CD14-positive monocyte (primary cell): ENCODE measurements at regions of chr10 and their contacts with region 1.

Region 1: GRCh38 chr10:102399217-102400089 is 3.9 kb downstream of the NFKB2 start:
- DNase-seq: peak; percentile 87 to 92 (median 91)
- H3K4me3 ChIP-seq: peak overlapping the region; percentile 12 to 68 (median 25)
- H3K4me3 Mint-ChIP-seq: peak overlapping the region; percentile 48 to 50
- H3K27ac ChIP-seq: peak overlapping the region; percentile 50 to 71
- H3K27ac Mint-ChIP-seq: peak overlapping the region; percentile 32 to 88 (median 75)
- H3K4me1 ChIP-seq: peaks cover 26 to 40% of the 10 kb centered on the region in 2 donors
- H3K4me1 Mint-ChIP-seq: peaks cover 30% of the 10 kb centered on the region
- H3K27me3 ChIP-seq: no peaks in the 10 kb centered on the region
- H3K27me3 Mint-ChIP-seq: peaks cover 0 to 4% (median 3%) of the 10 kb centered on the region in 3 donors
- CTCF ChIP-seq: peak; percentile 96

Region 2: GRCh38 chr10:102414749-102415148 is 15.3 kb after region 1 on chr10:
- intact Hi-C with region 1: loop called in 1 of 2 experiments (anchors 2 kb)
- DNase-seq: no peak
- H3K4me3 ChIP-seq: no peak overlapping the region
- H3K4me3 Mint-ChIP-seq: peak overlapping the region in 1 of 2 donors; percentile 16
- H3K27ac ChIP-seq: no peak overlapping the region
- H3K27ac Mint-ChIP-seq: no peak overlapping the region
- H3K4me1 ChIP-seq: peaks cover 13 to 22% of the 10 kb centered on the region in 2 donors
- H3K4me1 Mint-ChIP-seq: peaks cover 24% of the 10 kb centered on the region
- H3K27me3 ChIP-seq: peaks cover 39 to 68% of the 10 kb centered on the region in 2 donors
- H3K27me3 Mint-ChIP-seq: peaks cover 56 to 82% (median 58%) of the 10 kb centered on the region in 3 donors
- CTCF ChIP-seq: no peak